CD4-positive, alpha-beta T cell (primary cell): ENCODE measurements at regions of chr7 and their contacts with region 1.

Region 1: GRCh38 chr7:104923010-104923421 is 91.0 kb upstream of the KMT2E start:
- DNase-seq: peak; percentile 47 to 89 (median 65)
- ATAC-seq: peak; percentile 95
- H3K4me3 ChIP-seq: no peak overlapping the region
- H3K4me3 Mint-ChIP-seq: no peak overlapping the region
- H3K27ac ChIP-seq: no peak overlapping the region
- H3K27ac Mint-ChIP-seq: no peak overlapping the region
- H3K4me1 ChIP-seq: peaks cover 6% of the 10 kb centered on the region
- H3K4me1 Mint-ChIP-seq: no peaks in the 10 kb centered on the region
- H3K27me3 ChIP-seq: no peaks in the 10 kb centered on the region
- H3K27me3 Mint-ChIP-seq: no peaks in the 10 kb centered on the region
- CTCF ChIP-seq: peak; percentile 76

Region 2: GRCh38 chr7:104231054-104232046 is 691.7 kb before region 1 on chr7:
- CTCF ChIA-PET with region 1: interaction called, 9 read pairs
- POLR2A ChIA-PET with region 1: no interaction called
- intact Hi-C with region 1: loop called (anchors 2 to 5 kb)
- DNase-seq: peak in 11 of 14 experiments; percentile 7 to 64 (median 18)
- ATAC-seq: peak; percentile 75
- H3K4me3 ChIP-seq: no peak overlapping the region
- H3K4me3 Mint-ChIP-seq: no peak overlapping the region
- H3K27ac ChIP-seq: no peak overlapping the region
- H3K27ac Mint-ChIP-seq: no peak overlapping the region
- H3K4me1 ChIP-seq: peaks cover 6% of the 10 kb centered on the region
- H3K4me1 Mint-ChIP-seq: no peaks in the 10 kb centered on the region
- H3K27me3 ChIP-seq: peaks cover 3 to 16% of the 10 kb centered on the region in 2 experiments
- H3K27me3 Mint-ChIP-seq: peaks cover 36% of the 10 kb centered on the region
- CTCF ChIP-seq: peak; percentile 84

Region 3: DNA sequence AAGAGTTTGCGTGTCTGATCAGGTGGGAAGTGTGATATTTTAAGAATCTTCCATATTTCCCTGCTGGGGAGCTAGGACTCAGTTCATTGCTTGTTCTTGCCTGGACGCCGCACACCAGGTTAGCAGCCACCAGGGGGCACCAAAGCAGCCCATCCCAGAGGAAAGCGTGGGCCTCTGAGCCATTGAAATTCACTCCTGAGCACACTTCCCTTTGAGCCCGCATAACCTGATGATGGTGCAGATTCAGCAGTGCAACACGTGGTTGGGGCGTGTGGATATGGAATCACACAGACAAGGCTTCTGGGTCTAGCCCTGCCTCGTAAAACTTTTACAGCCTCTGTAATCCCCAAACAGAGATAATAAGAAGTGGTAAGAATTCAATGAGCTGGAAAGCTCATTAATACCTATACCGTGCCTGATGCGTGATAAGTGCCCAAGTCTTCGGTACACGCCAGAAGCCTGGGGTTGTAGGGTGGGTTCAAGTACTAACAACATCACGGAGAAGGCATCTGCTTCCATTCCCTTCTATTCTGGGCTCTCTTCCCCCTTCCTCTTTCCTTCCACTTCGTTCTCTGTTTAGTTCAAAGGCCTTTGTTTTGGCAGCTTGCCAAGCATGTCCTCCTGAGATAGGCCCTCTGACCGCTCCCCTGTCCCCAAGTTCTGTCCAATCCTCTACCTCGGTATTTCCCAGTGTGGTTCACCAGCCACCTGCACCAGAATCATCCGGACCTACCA is 39.1 kb before region 1 on chr7:
- CTCF ChIA-PET with region 1: interaction called, 61 read pairs
- POLR2A ChIA-PET with region 1: interaction called, 8 read pairs
- intact Hi-C with region 1: loop called in 1 of 2 experiments (anchors 1 kb)
- DNase-seq: peak; percentile 49 to 88 (median 70)
- ATAC-seq: peak; percentile 92
- H3K4me3 ChIP-seq: no peak overlapping the region
- H3K4me3 Mint-ChIP-seq: no peak overlapping the region
- H3K27ac ChIP-seq: no peak overlapping the region
- H3K27ac Mint-ChIP-seq: no peak overlapping the region
- H3K4me1 ChIP-seq: peaks cover 5% of the 10 kb centered on the region
- H3K4me1 Mint-ChIP-seq: peaks cover 10% of the 10 kb centered on the region
- H3K27me3 ChIP-seq: no peaks in the 10 kb centered on the region
- H3K27me3 Mint-ChIP-seq: no peaks in the 10 kb centered on the region
- CTCF ChIP-seq: peak; percentile 93

Region 4: DNA sequence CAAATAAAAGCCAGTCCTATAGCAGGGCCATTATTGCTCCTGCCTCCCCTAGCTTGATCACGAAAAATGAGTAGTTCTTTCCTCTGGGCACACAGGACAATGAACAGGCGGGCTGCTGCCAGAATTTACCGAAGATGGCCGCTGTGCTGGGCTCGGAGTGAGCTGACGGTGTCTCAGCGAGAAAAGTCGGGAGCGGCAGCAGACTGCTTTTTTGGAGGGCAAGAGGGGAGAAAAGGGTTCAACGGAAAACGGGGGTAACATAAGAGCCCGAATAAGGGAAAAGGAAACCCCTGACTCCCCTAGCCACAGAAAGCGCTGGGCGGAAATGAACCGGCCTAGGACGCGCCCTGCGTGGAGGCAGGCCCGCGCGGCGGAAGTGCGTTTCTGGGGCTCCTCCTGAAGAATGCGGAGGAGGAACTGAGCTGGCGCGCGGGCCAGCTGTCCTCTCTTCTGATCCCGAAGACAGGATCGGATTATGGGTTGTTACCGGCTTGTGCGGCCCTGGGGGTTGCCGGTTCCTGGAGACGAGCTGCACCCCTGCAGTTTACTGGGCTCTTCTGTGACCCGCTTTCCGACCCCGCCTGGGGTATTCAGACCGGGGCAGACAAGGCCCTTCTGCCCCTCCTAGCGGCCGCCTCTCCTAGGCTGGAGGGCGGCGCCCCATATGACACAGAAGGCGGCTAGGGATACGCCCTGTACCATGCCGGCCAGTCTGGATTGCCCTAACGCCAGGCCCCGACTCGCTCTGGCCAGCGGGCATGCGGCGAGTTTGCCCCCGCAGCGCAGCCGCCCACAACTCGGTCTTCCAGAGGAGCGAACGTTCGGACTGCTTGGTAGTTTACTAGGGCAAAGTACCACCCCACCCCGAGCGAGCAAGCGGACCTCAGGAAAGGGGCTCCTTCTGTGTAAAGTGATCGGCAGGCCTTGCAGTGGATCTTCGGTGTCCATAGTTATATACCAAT is 60.8 kb after region 1 on chr7:
- CTCF ChIA-PET with region 1: interaction called, 17 read pairs
- POLR2A ChIA-PET with region 1: interaction called, 5 read pairs
- intact Hi-C with region 1: loop called (anchors 1 to 2 kb)
- DNase-seq: peak; percentile 69 to 91 (median 78)
- ATAC-seq: peak; percentile 82
- H3K4me3 ChIP-seq: peak overlapping the region; percentile 80
- H3K4me3 Mint-ChIP-seq: peak overlapping the region; percentile 100
- H3K27ac ChIP-seq: peak overlapping the region; percentile 96 to 98
- H3K27ac Mint-ChIP-seq: peak overlapping the region; percentile 99
- H3K4me1 ChIP-seq: peaks cover 26% of the 10 kb centered on the region
- H3K4me1 Mint-ChIP-seq: peaks cover 63% of the 10 kb centered on the region
- H3K27me3 ChIP-seq: no peaks in the 10 kb centered on the region
- H3K27me3 Mint-ChIP-seq: no peaks in the 10 kb centered on the region
- CTCF ChIP-seq: peak; percentile 54

Region 5: GRCh38 chr7:105330526-105330925 is 407.5 kb after region 1 on chr7:
- CTCF ChIA-PET with region 1: no interaction called
- POLR2A ChIA-PET with region 1: no interaction called
- intact Hi-C with region 1: loop called in 1 of 2 experiments (anchors 5 kb)
- DNase-seq: no peak
- ATAC-seq: no peak
- H3K4me3 ChIP-seq: no peak overlapping the region
- H3K4me3 Mint-ChIP-seq: no peak overlapping the region
- H3K27ac ChIP-seq: no peak overlapping the region
- H3K27ac Mint-ChIP-seq: no peak overlapping the region
- H3K4me1 ChIP-seq: peaks cover 2% of the 10 kb centered on the region
- H3K4me1 Mint-ChIP-seq: peaks cover 39% of the 10 kb centered on the region
- H3K27me3 ChIP-seq: no peaks in the 10 kb centered on the region
- H3K27me3 Mint-ChIP-seq: no peaks in the 10 kb centered on the region
- CTCF ChIP-seq: no peak

Region 6: GRCh38 chr7:105487579-105488571 is 564.9 kb after region 1 on chr7:
- CTCF ChIA-PET with region 1: no interaction called
- POLR2A ChIA-PET with region 1: no interaction called
- intact Hi-C with region 1: loop called (anchors 5 kb)
- DNase-seq: peak in 4 of 14 experiments; percentile 1 to 54 (median 48)
- ATAC-seq: no peak
- H3K4me3 ChIP-seq: no peak overlapping the region
- H3K4me3 Mint-ChIP-seq: no peak overlapping the region
- H3K27ac ChIP-seq: no peak overlapping the region
- H3K27ac Mint-ChIP-seq: no peak overlapping the region
- H3K4me1 ChIP-seq: no peaks in the 10 kb centered on the region
- H3K4me1 Mint-ChIP-seq: peaks cover 4% of the 10 kb centered on the region
- H3K27me3 ChIP-seq: no peaks in the 10 kb centered on the region
- H3K27me3 Mint-ChIP-seq: no peaks in the 10 kb centered on the region
- CTCF ChIP-seq: peak; percentile 41